ENCODE measurements at regions of chr19 and their contacts with region 1.

Region 1: GRCh38 chr19:49200238-49200862 is 42.8 kb downstream of the TRPM4 start:
- DNase-seq: peak; percentile 25
- H3K4me3 Mint-ChIP-seq: no peak overlapping the region
- H3K27ac Mint-ChIP-seq: no peak overlapping the region
- H3K4me1 Mint-ChIP-seq: peaks cover 7% of the 10 kb centered on the region
- H3K27me3 Mint-ChIP-seq: peaks cover 7% of the 10 kb centered on the region

Region 2: DNA sequence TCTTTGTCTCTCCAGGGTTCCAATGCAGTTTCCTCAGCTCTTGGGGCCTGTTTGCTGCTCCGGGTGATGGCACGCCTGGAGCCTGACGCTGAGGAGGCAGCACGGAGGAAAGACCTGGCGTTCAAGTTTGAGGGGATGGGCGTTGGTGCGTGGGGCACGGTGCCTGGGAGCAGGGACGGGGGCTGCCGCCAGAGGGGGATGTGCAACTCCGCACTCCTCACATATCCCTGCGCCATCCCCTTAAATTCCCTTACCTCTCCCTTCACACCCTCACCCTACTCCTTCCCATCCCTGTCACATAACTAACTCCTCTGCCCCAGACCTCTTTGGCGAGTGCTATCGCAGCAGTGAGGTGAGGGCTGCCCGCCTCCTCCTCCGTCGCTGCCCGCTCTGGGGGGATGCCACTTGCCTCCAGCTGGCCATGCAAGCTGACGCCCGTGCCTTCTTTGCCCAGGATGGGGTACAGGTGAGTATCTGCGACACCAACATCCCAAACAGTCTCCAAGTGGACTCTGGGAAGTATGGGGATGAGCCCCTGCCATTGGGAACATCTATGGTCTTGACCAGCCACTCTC is 11.6 kb before region 1 on chr19:
- CTCF ChIA-PET with region 1: interaction called, 12 read pairs
- DNase-seq: no peak
- H3K4me3 Mint-ChIP-seq: no peak overlapping the region
- H3K27ac Mint-ChIP-seq: no peak overlapping the region
- H3K4me1 Mint-ChIP-seq: peaks cover 16% of the 10 kb centered on the region
- H3K27me3 Mint-ChIP-seq: peaks cover 28% of the 10 kb centered on the region

Region 3: DNA sequence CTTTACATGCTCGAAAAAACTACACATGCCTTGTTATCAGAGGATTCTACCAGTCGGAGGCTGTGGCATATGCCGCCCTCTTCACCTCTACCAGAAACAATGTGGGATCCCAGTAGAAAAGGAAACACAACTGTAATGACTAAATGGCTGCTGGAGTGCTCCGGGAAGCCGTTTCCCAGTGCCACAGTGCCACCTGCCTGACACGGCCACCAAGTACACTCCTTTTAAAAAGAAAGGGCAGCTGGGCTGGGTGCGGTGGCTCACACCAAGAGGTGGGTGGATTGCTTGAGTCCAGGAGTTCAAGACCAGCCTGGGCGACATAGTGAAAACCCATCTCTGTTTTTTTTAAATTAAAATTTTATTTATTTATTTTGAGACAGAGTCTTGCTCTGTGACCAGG is 24.5 kb after region 1 on chr19:
- CTCF ChIA-PET with region 1: interaction called, 12 read pairs
- DNase-seq: peak; percentile 69
- H3K4me3 Mint-ChIP-seq: no peak overlapping the region
- H3K27ac Mint-ChIP-seq: no peak overlapping the region
- H3K4me1 Mint-ChIP-seq: peaks cover 10% of the 10 kb centered on the region
- H3K27me3 Mint-ChIP-seq: peaks cover 20% of the 10 kb centered on the region

Measured in activated naive CD4-positive, alpha-beta T cell treated with anti-CD3 and anti-CD28 coated beads, Interleukin-2, amount 10 ng/mL, durations not matched to agents 7 days and 5 days (primary cell).